CD4-positive, alpha-beta T cell (primary cell): ENCODE measurements at regions of chr7 and their contacts with region 1.

Region 1: DNA sequence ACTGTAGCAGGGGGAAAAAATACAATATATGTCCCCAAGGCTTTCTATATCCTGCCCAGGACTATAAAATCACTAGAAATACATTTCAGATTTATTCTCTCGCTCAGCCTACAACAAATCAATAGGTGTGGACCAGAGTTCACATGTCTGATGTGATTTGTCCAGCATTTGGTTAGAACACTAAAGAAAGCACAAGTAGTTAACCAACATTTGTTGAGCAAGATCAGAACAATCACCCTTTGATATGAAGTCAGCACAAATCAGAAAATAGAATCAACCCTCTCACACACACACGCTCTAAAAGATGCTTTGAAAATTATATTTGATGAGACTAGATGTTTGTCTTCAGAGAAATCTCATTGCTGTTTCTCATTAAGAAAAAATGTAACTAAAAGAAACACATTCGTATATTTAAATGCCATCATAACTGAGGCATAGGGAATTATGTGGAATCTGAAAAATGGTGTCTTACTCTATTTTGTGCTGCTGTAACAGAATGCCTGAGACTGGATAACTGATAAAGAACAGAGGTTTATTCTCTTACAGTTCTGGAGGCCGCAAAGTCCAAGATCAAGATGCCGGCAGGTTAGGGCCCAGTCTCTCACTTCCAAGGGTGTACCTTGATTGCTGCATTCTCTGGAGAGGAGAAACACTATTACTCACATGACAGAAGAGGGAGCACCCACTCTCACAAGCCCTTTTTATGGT is 10.5 kb downstream of the AKR1D1 start:
- DNase-seq: no peak
- ATAC-seq: no peak
- H3K4me3 ChIP-seq: no peak overlapping the region
- H3K4me3 Mint-ChIP-seq: no peak overlapping the region
- H3K27ac ChIP-seq: no peak overlapping the region
- H3K27ac Mint-ChIP-seq: no peak overlapping the region
- H3K4me1 ChIP-seq: no peaks in the 10 kb centered on the region
- H3K4me1 Mint-ChIP-seq: no peaks in the 10 kb centered on the region
- H3K27me3 ChIP-seq: no peaks in the 10 kb centered on the region
- H3K27me3 Mint-ChIP-seq: peaks cover 16% of the 10 kb centered on the region
- CTCF ChIP-seq: no peak

Region 2: GRCh38 chr7:138023618-138024342 is 62.9 kb before region 1 on chr7:
- CTCF ChIA-PET with region 1: no interaction called
- POLR2A ChIA-PET with region 1: no interaction called
- intact Hi-C with region 1: no loop called
- DNase-seq: no peak
- ATAC-seq: no peak
- H3K4me3 ChIP-seq: no peak overlapping the region
- H3K4me3 Mint-ChIP-seq: no peak overlapping the region
- H3K27ac ChIP-seq: no peak overlapping the region
- H3K27ac Mint-ChIP-seq: no peak overlapping the region
- H3K4me1 ChIP-seq: no peaks in the 10 kb centered on the region
- H3K4me1 Mint-ChIP-seq: no peaks in the 10 kb centered on the region
- H3K27me3 ChIP-seq: no peaks in the 10 kb centered on the region
- H3K27me3 Mint-ChIP-seq: no peaks in the 10 kb centered on the region
- CTCF ChIP-seq: no peak

Region 3: GRCh38 chr7:138072726-138073125 is 14.0 kb before region 1 on chr7:
- CTCF ChIA-PET with region 1: no interaction called
- POLR2A ChIA-PET with region 1: no interaction called
- intact Hi-C with region 1: loop called in 1 of 2 experiments (anchors 1 kb)
- DNase-seq: no peak
- ATAC-seq: no peak
- H3K4me3 ChIP-seq: no peak overlapping the region
- H3K4me3 Mint-ChIP-seq: no peak overlapping the region
- H3K27ac ChIP-seq: no peak overlapping the region
- H3K27ac Mint-ChIP-seq: no peak overlapping the region
- H3K4me1 ChIP-seq: no peaks in the 10 kb centered on the region
- H3K4me1 Mint-ChIP-seq: no peaks in the 10 kb centered on the region
- H3K27me3 ChIP-seq: no peaks in the 10 kb centered on the region
- H3K27me3 Mint-ChIP-seq: peaks cover 7% of the 10 kb centered on the region
- CTCF ChIP-seq: no peak